Kidney (tissue), 22 donors: ENCODE measurements at regions of chr9 and their contacts with region 1.

Region 1: GRCh38 chr9:127943731-127944144 is 6.1 kb upstream of the DPM2 start:
- DNase-seq: peak; percentile 60 to 93 (median 81)
- H3K4me3 ChIP-seq: no peak overlapping the region
- H3K27ac ChIP-seq: peak overlapping the region in 1 of 2 donors; percentile 33
- H3K4me1 ChIP-seq: peaks cover 0 to 25% (median 5%) of the 10 kb centered on the region in 3 donors
- H3K27me3 ChIP-seq: no peaks in the 10 kb centered on the region
- CTCF ChIP-seq: peak; percentile 92

Region 2: GRCh38 chr9:128034821-128035764 is 91.4 kb after region 1 on chr9:
- intact Hi-C with region 1: loop called (anchors 2 kb)
- DNase-seq: peak; percentile 48 to 91 (median 81)
- H3K4me3 ChIP-seq: no peak overlapping the region
- H3K27ac ChIP-seq: no peak overlapping the region
- H3K4me1 ChIP-seq: no peaks in the 10 kb centered on the region
- H3K27me3 ChIP-seq: no peaks in the 10 kb centered on the region
- CTCF ChIP-seq: peak; percentile 95

Region 3: DNA sequence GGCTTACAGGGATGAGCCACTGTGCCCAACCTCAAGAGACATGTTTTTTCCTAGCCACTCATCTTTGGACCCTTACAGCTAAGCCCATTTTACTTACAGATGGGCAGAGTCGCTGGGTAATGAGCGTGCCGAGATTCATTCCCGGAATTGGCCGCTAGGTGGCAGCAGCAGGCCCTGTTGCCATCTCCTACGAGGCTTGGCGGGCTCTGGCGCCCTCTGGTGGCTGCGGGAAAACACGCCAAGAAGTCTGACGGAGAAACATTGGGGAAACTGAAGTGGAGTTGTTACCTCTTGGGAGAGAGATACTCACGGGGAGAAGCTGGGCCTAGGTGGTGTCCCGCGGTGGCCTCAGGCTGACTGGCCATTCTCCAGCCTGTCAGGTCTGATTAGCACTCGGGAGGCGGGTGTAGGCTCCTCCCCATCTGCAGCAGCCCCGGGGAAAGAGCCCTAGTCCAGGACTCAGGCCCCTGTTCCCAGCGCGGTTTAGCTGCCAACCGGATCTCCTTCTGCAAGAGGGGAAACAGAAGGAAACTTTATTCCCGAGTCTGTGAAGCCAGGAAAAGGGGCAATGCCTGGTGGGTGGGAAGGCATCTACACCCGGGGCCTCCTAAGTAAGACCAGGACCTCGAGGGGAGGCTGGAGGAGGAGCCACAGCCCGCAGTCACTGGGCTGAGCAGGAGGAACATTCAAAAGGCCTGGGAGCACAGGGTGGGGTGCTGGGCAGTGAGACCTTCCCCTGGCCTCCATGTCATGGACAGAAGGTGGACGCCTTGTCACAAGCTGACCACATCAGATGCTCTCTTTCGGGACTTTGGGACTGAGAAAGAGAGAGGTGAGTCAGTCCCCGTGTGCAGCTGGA is 174.1 kb after region 1 on chr9:
- intact Hi-C with region 1: loop called (anchors 10 kb)
- DNase-seq: peak; percentile 92 to 97 (median 94)
- H3K4me3 ChIP-seq: no peak overlapping the region
- H3K27ac ChIP-seq: peak overlapping the region in 1 of 2 donors; percentile 9
- H3K4me1 ChIP-seq: peaks cover 0 to 28% (median 15%) of the 10 kb centered on the region in 3 donors
- H3K27me3 ChIP-seq: no peaks in the 10 kb centered on the region
- CTCF ChIP-seq: peak; percentile 100